CD4-positive, alpha-beta T cell (primary cell): ENCODE measurements at regions of chr2 and their contacts with region 1.

Region 1: DNA sequence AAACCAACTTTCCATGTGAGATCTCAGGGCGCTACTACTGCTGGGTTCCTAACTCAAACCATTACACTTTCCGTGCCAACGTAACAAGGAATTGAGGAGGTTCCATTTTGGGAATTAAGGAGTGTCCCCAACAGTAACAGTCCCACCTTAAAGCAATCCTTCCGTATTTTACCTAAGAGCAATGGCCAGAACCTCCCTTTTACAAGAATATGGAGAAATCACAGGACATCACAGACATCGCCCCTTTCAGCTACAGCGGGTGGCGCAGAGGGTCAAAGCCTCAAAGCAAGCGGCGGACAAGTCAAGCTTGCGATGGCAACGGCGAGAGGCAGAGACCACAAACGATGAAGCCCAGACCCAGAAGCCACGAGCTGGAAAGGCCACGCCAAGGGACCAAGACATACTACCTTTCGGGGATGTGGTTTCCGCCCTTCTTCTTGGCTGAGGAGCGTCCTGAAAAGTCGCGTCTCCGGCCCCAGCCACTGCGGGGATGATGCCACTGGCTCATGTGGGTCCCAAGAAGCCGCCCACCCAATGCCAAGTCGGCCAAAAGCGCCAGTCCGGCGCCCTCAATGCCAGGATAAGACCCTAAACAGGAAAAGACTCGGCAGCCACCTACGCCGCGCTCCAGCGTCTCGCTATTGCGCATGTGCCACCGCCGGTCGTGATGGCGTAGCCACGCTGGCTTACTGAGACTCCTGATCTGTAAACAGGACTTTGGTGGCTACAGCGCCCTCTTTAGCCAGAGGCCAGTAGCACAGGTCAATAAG is at the start of gene DUSP11:
- DNase-seq: peak; percentile 93 to 98 (median 96)
- ATAC-seq: peak; percentile 99
- H3K4me3 ChIP-seq: peak within 1 kb of the TSS; percentile 95
- H3K4me3 Mint-ChIP-seq: peak within 1 kb of the TSS; percentile 99
- H3K27ac ChIP-seq: peak within 1 kb of the TSS; percentile 85 to 91
- H3K27ac Mint-ChIP-seq: peak within 1 kb of the TSS; percentile 97
- H3K4me1 ChIP-seq: peaks cover 14% of the 10 kb centered on the region
- H3K4me1 Mint-ChIP-seq: peaks cover 45% of the 10 kb centered on the region
- H3K27me3 ChIP-seq: no peaks in the 10 kb centered on the region
- H3K27me3 Mint-ChIP-seq: peaks cover 11% of the 10 kb centered on the region
- CTCF ChIP-seq: peak; percentile 90
- total RNA-seq, gene DUSP11: 57.1 to 61.5 TPM

Region 2: DNA sequence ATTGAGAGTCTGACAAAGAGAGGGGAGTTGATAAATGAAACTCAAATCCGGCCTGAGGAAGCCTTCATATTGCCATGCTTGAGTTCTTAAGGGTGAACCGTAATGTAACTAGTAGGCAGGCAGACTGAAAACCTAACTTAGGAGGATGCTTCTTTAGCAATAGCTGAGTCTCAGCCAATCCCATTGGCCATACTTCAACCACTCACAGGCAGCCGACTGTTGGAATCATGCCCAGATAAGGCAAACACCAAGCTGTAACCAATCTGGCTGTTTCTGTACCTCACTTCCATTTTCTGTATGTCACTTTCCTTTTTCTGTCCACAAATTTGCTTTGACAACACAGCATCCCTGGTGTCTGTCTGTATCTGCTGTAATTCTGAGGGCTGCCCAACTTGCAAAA is 82.0 kb before region 1 on chr2:
- CTCF ChIA-PET with region 1: no interaction called
- POLR2A ChIA-PET with region 1: no interaction called
- intact Hi-C with region 1: loop called in 1 of 2 experiments (anchors 10 kb)
- DNase-seq: no peak
- ATAC-seq: no peak
- H3K4me3 ChIP-seq: no peak overlapping the region
- H3K4me3 Mint-ChIP-seq: no peak overlapping the region
- H3K27ac ChIP-seq: no peak overlapping the region
- H3K27ac Mint-ChIP-seq: no peak overlapping the region
- H3K4me1 ChIP-seq: no peaks in the 10 kb centered on the region
- H3K4me1 Mint-ChIP-seq: no peaks in the 10 kb centered on the region
- H3K27me3 ChIP-seq: peaks cover 3% of the 10 kb centered on the region in 2 experiments
- H3K27me3 Mint-ChIP-seq: peaks cover 24% of the 10 kb centered on the region
- CTCF ChIP-seq: no peak

Region 3: GRCh38 chr2:73821227-73821626 is 41.6 kb after region 1 on chr2:
- CTCF ChIA-PET with region 1: interaction called, 6 read pairs
- POLR2A ChIA-PET with region 1: no interaction called
- intact Hi-C with region 1: loop called in 1 of 2 experiments (anchors 2 kb)
- DNase-seq: no peak
- ATAC-seq: no peak
- H3K4me3 ChIP-seq: no peak overlapping the region
- H3K4me3 Mint-ChIP-seq: no peak overlapping the region
- H3K27ac ChIP-seq: no peak overlapping the region
- H3K27ac Mint-ChIP-seq: no peak overlapping the region
- H3K4me1 ChIP-seq: no peaks in the 10 kb centered on the region
- H3K4me1 Mint-ChIP-seq: peaks cover 9% of the 10 kb centered on the region
- H3K27me3 ChIP-seq: peaks cover 0 to 2% of the 10 kb centered on the region in 2 experiments
- H3K27me3 Mint-ChIP-seq: peaks cover 5% of the 10 kb centered on the region
- CTCF ChIP-seq: no peak

Region 4: DNA sequence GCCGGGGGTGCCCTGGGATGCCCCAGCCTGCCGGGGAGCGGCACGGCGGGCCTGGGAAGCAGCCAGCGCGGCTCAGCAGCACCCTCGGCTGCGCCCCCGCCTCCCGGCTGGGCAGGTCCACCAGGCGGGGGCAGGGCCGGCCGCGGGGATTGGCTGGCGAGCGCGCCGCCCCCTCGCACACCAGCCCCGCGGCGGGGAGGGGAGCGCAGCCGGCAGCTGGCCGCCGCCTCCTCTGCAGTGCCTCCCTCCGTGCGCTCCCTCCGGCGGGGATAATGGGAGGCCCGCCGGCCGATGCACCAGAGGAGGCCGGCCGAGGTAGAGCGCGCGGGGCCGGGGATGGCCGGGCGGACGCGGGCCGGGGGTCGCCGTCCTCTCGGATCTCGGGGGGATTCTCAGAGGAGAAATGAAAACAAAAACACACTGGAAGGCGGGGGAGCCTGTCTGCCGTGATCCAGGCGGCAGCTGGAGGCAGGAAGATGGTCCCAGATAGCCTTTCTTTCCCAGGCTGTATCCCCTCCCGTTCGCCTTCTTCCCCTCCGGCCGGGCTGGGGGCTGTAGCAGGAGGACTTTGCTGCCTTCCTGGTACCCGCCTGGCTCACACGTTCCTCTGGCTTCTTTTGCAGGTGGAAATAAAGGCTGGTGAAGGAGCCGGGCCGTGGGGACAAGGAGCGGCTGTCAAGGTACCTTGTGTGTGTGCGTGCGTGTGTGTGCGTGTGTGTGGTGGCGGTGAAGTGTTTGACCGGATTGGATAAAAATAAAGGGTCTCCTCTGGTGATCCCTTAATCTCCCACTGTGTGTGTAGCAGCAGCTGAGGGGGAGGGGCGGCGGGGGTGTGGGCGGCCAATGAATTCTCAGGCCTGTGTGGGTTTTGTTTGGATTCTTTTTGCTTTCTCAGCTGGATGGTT is 223.1 kb after region 1 on chr2:
- CTCF ChIA-PET with region 1: no interaction called
- POLR2A ChIA-PET with region 1: no interaction called
- intact Hi-C with region 1: no loop called
- DNase-seq: peak; percentile 53 to 92 (median 77)
- ATAC-seq: peak; percentile 85
- H3K4me3 ChIP-seq: peak overlapping the region; percentile 58
- H3K4me3 Mint-ChIP-seq: peak overlapping the region; percentile 90
- H3K27ac ChIP-seq: no peak overlapping the region
- H3K27ac Mint-ChIP-seq: peak overlapping the region; percentile 68
- H3K4me1 ChIP-seq: peaks cover 67% of the 10 kb centered on the region
- H3K4me1 Mint-ChIP-seq: peaks cover 77% of the 10 kb centered on the region
- H3K27me3 ChIP-seq: no peaks in the 10 kb centered on the region
- H3K27me3 Mint-ChIP-seq: no peaks in the 10 kb centered on the region
- CTCF ChIP-seq: no peak